Colonic mucosa (tissue), 4 donors: ENCODE measurements at regions of chr17 and their contacts with region 1.

Region 1: GRCh38 chr17:8253800-8254199 is 4.7 kb downstream of the PFAS start:
- DNase-seq: peak; percentile 27
- H3K4me3 ChIP-seq: no peak overlapping the region
- H3K27ac ChIP-seq: no peak overlapping the region
- H3K4me1 ChIP-seq: no peaks in the 10 kb centered on the region
- H3K27me3 ChIP-seq: no peaks in the 10 kb centered on the region
- CTCF ChIP-seq: peak; percentile 32

Region 2: GRCh38 chr17:7897773-7898172 is 356.0 kb before region 1 on chr17:
- intact Hi-C with region 1: no loop called
- DNase-seq: no peak
- H3K4me3 ChIP-seq: no peak overlapping the region
- H3K27ac ChIP-seq: no peak overlapping the region
- H3K4me1 ChIP-seq: no peaks in the 10 kb centered on the region
- H3K27me3 ChIP-seq: no peaks in the 10 kb centered on the region
- CTCF ChIP-seq: peak; percentile 42

Region 3: DNA sequence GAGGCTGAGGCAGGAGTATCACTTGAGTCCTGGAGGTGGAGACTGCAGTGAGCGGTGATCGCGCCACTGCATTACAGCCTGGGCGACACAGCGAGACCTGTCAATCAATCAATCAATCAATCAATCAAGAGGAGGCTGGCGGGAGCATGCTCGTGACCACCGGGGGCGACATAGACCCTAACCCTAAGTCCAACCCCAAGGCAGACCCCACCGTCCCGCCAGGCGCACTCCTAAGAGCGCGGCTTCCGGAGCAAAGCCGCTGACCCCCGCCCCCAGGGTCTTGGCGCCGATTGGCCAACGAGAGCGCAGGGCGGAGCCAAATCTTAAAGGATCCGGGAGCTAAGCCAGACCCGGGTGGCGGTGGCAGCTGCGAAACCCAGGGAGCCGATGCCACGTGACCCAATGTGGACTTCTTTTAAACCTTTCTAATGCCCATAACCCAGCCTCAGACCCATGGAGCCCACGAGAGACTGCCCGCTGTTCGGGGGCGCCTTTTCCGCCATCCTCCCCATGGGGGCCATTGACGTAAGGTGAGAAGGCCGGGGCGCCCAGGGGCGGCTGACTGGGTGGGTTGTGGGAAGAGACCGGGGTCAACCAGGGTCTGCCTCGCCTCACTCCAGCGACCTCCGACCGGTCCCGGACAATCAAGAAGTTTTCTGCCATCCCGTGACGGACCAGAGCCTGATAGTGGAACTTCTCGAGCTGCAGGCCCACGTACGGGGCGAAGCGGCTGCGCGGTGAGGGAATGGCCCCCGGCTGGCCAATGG is 34.7 kb after region 1 on chr17 and contains the start of gene RANGRF:
- intact Hi-C with region 1: loop called (anchors 5 kb)
- DNase-seq: peak; percentile 95
- H3K4me3 ChIP-seq: peak within 1 kb of the TSS; percentile 50
- H3K27ac ChIP-seq: peak within 1 kb of the TSS; percentile 66
- H3K4me1 ChIP-seq: no peaks in the 10 kb centered on the region
- H3K27me3 ChIP-seq: no peaks in the 10 kb centered on the region
- CTCF ChIP-seq: no peak
- total RNA-seq, gene RANGRF: 16.8 to 26.5 TPM

Region 4: DNA sequence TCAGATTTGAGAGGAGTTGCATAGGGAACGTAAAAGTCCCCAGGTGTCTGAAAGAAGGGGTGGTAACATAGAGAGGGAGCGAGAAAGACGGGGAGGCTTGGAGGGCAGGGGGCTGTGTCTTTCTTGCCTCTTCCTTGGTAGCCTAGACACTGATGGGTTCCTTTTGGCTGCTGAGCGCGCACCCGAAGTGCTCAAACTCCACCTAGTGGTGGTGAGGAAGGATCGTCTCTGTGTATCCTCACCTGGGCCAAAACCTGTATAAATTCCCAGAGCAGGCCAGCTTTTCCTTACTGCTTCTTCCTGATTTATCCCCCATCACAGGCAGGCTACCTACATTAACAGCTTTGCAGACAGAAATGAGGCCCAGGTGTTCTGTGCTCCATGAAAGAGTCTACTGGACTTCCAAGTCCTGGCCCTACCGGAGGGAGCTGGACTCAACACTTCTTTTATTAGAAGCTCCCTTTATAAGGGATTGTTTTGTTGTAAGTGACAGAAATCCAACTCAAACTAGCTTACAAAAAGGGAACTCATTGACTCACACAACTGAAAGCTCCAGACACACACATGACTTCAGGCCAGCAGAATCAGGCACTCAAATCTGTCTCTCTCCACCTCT is 46.9 kb after region 1 on chr17:
- intact Hi-C with region 1: loop called (anchors 5 kb)
- DNase-seq: peak; percentile 47
- H3K4me3 ChIP-seq: no peak overlapping the region
- H3K27ac ChIP-seq: no peak overlapping the region
- H3K4me1 ChIP-seq: no peaks in the 10 kb centered on the region
- H3K27me3 ChIP-seq: no peaks in the 10 kb centered on the region
- CTCF ChIP-seq: peak; percentile 74

Region 5: DNA sequence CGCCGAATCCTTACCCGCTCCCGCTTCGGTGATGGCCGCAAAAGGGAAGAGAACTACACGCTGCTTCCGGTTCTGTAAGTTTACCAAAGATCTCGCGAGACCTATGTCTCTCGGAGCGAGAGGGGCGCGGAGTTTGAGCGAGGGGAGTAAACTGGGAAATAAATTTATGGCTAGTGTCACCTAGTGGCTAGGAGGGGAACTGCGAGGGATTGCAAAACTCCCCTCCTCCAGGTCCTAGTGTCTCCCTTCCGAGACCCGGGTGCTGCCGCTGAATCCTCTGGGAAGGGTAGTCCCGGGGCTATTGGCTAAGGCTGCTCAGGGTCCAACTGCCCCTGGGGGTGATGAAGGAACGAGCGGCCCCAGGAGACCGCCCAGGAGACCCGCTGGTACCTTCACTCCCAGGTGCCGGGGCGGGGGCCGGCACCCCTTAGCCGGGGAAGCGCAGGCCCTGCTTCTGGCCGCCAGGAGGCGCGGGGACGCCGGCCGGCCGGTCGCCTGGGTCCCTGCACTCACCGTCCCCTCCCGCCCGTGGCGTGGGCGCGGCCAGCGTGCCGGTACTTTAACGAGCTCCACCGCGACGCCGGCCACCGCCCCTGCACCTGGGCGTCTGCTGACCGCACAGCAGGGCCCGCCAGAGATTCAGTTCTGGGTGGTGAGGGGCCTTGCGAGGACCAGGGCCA is 129.5 kb after region 1 on chr17 and contains the start of gene RPL26:
- intact Hi-C with region 1: loop called (anchors 10 kb)
- DNase-seq: peak; percentile 98
- H3K4me3 ChIP-seq: peak within 1 kb of the TSS; percentile 82
- H3K27ac ChIP-seq: peak within 1 kb of the TSS; percentile 77
- H3K4me1 ChIP-seq: peaks cover 18% of the 10 kb centered on the region
- H3K27me3 ChIP-seq: no peaks in the 10 kb centered on the region
- CTCF ChIP-seq: peak; percentile 98
- total RNA-seq, gene RPL26: 1,223 to 1,367 TPM